Naive thymus-derived CD8-positive, alpha-beta T cell (primary cell): ENCODE measurements at regions of chr4 and their contacts with region 1.

Region 1: GRCh38 chr4:108473221-108473620 is 147.2 kb upstream of the RPL34 start:
- DNase-seq: peak in 1 of 10 donors; percentile 20
- ATAC-seq: peak in 1 of 2 donors; percentile 42
- H3K4me3 Mint-ChIP-seq: no peak overlapping the region
- H3K27ac Mint-ChIP-seq: peak overlapping the region in 1 of 10 donors; percentile 46
- H3K4me1 Mint-ChIP-seq: peaks cover 4 to 46% (median 13%) of the 10 kb centered on the region in 4 donors
- H3K27me3 Mint-ChIP-seq: no peaks in the 10 kb centered on the region

Region 2: GRCh38 chr4:108370291-108371141 is 102.7 kb before region 1 on chr4:
- POLR2A ChIA-PET with region 1: interaction called, 10 read pairs
- DNase-seq: peak; percentile 16 to 65 (median 44)
- ATAC-seq: peak; percentile 85 to 87
- H3K4me3 Mint-ChIP-seq: peak overlapping the region; percentile 84 to 96 (median 92)
- H3K27ac Mint-ChIP-seq: peak overlapping the region; percentile 85 to 97 (median 92)
- H3K4me1 Mint-ChIP-seq: peaks cover 32 to 65% (median 44%) of the 10 kb centered on the region in 4 donors
- H3K27me3 Mint-ChIP-seq: peaks cover 0 to 3% (median 0%) of the 10 kb centered on the region in 5 donors